ENCODE measurements at regions of chrX and their contacts with region 1.

Region 1: DNA sequence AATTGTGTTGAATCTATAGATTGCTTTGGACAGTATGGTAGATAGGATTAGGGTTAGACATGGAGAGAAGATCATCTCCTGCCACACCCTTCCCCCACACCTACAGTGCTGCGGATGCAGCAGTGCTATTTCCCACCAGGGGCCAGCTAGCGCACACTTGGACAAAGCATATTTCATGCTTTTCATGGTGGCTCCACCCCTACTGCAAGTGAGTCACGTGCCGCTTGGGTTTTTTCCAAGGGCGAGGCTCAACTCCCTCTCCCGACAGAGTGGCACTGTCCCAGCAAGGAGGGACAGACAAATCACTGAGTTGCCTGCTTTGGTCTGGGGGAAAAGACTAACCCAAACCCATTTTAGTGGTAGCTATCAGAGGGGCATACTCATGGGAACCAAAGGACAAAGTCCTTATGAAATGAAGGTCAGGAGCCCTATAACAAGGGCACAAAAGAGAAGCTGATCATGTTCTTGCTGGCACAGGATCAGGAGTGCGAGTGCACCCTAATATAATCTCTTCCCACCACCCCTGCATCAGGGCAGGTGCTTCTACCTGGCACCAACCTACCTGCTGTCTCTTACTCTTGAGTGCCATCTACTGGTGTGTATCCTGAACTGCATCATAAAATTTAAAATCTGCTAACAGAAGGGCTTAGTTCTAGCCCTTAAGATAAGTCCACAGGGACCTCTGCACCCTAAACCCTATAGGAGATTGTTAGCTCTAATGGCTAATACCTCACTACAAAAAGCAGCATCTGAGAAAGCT is 55.1 kb upstream of the PGAM4 start:
- DNase-seq: peak; percentile 18 to 33
- ATAC-seq: peak; percentile 34 to 66; a peak in 4 of 6 replicates
- H3K4me3 ChIP-seq: no peak overlapping the region
- H3K27ac ChIP-seq: 0 out of 6 replicates have a peak overlapping the region, but pooled peaks of 1 of the 2 experiments have one; percentile 28
- H3K4me1 ChIP-seq: peaks cover 3% of the 10 kb centered on the region; the same call in 1 of the 3 replicates
- CTCF ChIP-seq: peak; percentile 65
- EP300 ChIP-seq: no peak
- POLR2A ChIP-seq: no peak
- RAD21 ChIP-seq: peak; percentile 82 to 84

Region 2: DNA sequence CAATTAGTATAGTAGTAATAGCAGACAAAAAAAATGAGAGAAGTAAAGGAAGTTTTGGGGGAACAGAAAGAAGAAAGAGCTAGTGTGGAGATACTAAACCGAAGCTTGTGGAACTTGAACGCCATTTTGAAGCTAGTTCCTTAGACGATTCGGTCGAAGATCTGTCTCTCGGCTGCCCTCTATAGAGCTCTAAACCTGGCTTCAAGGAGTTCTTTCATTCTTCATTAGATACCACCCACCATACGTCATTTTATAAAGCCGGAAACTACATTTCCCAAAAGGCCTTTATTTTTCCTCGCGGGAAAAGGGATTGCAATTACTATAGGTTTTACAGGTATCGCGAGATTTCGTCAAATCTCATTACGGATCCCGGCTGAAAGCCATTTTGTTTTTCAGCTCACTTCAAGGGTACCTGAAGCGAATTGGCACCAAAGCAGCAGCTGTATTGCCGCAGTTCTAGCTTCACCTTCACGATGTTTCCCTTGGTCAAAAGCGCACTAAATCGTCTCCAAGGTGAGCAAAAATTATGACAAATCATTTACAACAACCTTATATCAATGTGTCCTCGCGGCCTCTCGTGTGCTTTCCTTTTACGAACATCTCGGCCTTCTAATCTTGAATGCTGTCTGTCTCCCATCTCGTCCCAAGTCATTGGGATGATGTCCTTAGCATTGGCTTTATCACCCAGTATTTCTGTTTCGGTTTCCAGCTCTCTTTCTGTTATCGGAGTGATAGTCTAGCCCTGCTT is 125.3 kb before region 1 on chrX and contains the start of gene COX7B:
- CTCF ChIA-PET with region 1: interaction called, 15 read pairs
- POLR2A ChIA-PET with region 1: interaction called, 7 read pairs
- DNase-seq: peak; percentile 72 to 97
- ATAC-seq: peak; percentile 82 to 83
- H3K4me3 ChIP-seq: peak within 1 kb of the TSS; percentile 85
- H3K27ac ChIP-seq: peak within 1 kb of the TSS; percentile 83 to 89
- H3K4me1 ChIP-seq: peaks cover 5% of the 10 kb centered on the region; the same call in 1 of the 3 replicates
- CTCF ChIP-seq: peak; percentile 44; the same call in 2 of the 3 replicates
- EP300 ChIP-seq: no peak
- POLR2A ChIP-seq: no peak; the same call in none of the 2 replicates
- RAD21 ChIP-seq: peak; percentile 46 to 50; a peak in 4 of 5 replicates
- polyA plus RNA-seq, gene COX7B: 1,133 and 1,475 TPM in 2 replicates

Region 3: GRCh38 chrX:77910108-77910840 is 114.3 kb before region 1 on chrX and contains the start of gene ATP7A:
- CTCF ChIA-PET with region 1: interaction called, 52 read pairs
- POLR2A ChIA-PET with region 1: interaction called, 7 read pairs
- DNase-seq: peak; percentile 92 to 95
- ATAC-seq: peak; percentile 96 to 98
- H3K4me3 ChIP-seq: peak within 1 kb of the TSS; percentile 58
- H3K27ac ChIP-seq: peak within 1 kb of the TSS; percentile 80 to 86
- H3K4me1 ChIP-seq: peaks cover 12% of the 10 kb centered on the region; the same call in 2 of the 3 replicates
- CTCF ChIP-seq: peak; percentile 62
- EP300 ChIP-seq: no peak
- POLR2A ChIP-seq: 0 out of 2 replicates have a peak, but pooled peaks have one; percentile 39
- RAD21 ChIP-seq: peak; percentile 77 to 88
- polyA plus RNA-seq, gene ATP7A: 12.2 and 13.0 TPM in 2 replicates

Region 4: GRCh38 chrX:78035061-78035460 is 10.5 kb after region 1 on chrX:
- CTCF ChIA-PET with region 1: interaction called, 12 read pairs
- POLR2A ChIA-PET with region 1: no interaction called
- DNase-seq: no peak
- ATAC-seq: no peak
- H3K4me3 ChIP-seq: no peak overlapping the region
- H3K27ac ChIP-seq: no peak overlapping the region
- H3K4me1 ChIP-seq: no peaks in the 10 kb centered on the region
- CTCF ChIP-seq: no peak
- EP300 ChIP-seq: no peak
- POLR2A ChIP-seq: no peak
- RAD21 ChIP-seq: no peak

Region 5: DNA sequence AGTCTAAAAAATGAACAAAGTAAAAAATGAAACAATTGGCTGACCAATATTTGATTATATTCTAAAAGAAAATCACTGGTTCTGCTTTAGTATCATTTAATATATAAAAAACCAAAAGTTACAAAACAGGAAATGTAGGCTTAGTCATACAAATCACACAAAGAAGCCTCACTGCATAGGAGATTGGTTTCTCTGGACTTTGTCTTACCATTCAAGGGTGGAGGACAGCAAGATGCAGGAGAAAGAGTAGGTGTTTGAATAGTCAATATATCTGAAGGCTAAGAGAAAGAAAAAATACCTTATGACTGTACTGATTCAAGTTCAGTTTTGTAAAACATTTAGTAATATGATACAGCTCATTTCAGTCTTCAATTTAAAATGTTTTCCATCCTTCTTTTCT is 143.5 kb after region 1 on chrX:
- CTCF ChIA-PET with region 1: no interaction called
- POLR2A ChIA-PET with region 1: no interaction called
- DNase-seq: no peak
- ATAC-seq: no peak
- H3K4me3 ChIP-seq: no peak overlapping the region
- H3K27ac ChIP-seq: no peak overlapping the region
- H3K4me1 ChIP-seq: no peaks in the 10 kb centered on the region
- CTCF ChIP-seq: no peak
- EP300 ChIP-seq: no peak
- POLR2A ChIP-seq: no peak
- RAD21 ChIP-seq: no peak